ENCODE measurements at regions of chr4 and their contacts with region 1.

Region 1: GRCh38 chr4:139554893-139555704 is 920 bp downstream of the SETD7 start:
- DNase-seq: peak; percentile 89
- H3K4me3 Mint-ChIP-seq: peak overlapping the region; percentile 82
- H3K27ac Mint-ChIP-seq: peak overlapping the region; percentile 73
- H3K4me1 Mint-ChIP-seq: peaks cover 25% of the 10 kb centered on the region
- H3K27me3 Mint-ChIP-seq: no peaks in the 10 kb centered on the region
- CTCF ChIP-seq: no peak

Region 2: DNA sequence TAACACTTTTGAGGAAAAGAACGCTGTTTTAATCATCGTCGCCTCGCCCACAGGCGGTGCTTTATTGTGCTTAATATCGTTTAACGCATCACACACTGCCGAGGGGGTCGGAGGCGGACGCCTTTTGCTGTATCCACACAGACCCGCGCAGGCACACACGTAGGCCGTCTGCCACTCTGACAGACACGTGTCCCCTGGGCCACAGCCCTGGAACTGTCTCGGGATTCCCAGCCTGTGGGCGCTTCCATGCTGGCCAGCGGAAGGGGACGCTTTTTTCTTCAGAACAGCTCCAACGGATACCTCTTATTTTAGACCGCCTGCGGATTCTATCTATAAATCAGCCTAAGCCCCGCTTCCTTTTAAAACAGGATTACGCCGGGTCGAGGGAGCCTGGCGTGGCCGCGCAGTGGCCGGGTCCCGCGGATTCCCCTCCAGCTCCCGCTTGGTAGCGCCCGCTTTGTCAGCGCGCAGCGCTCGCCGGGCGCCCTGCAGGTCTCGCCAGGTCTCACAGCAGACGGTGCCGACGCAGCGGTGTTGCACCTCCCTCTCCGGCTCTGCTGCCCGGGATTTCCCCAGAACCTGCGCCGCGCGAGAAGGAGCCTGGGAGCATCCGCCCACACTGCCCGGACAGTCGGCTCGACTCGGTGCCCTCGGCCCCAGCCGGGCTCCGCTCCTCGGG is 539.7 kb before region 1 on chr4 and contains the start of gene NOCT:
- CTCF ChIA-PET with region 1: no interaction called
- POLR2A ChIA-PET with region 1: interaction called, 10 read pairs
- intact Hi-C with region 1: no loop called
- DNase-seq: peak; percentile 94
- H3K4me3 Mint-ChIP-seq: peak within 1 kb of the TSS; percentile 72
- H3K27ac Mint-ChIP-seq: peak within 1 kb of the TSS; percentile 95
- H3K4me1 Mint-ChIP-seq: peaks cover 38% of the 10 kb centered on the region
- H3K27me3 Mint-ChIP-seq: no peaks in the 10 kb centered on the region
- CTCF ChIP-seq: no peak
- total RNA-seq, gene NOCT: 16.5 and 25.5 TPM in 2 replicates

Region 3: GRCh38 chr4:139453371-139454110 is 101.6 kb before region 1 on chr4:
- CTCF ChIA-PET with region 1: interaction called, 6 read pairs
- POLR2A ChIA-PET with region 1: interaction called, 67 read pairs
- intact Hi-C with region 1: loop called (anchors 10 kb)
- DNase-seq: peak; percentile 98
- H3K4me3 Mint-ChIP-seq: peak overlapping the region; percentile 100
- H3K27ac Mint-ChIP-seq: peak overlapping the region; percentile 97
- H3K4me1 Mint-ChIP-seq: peaks cover 45% of the 10 kb centered on the region
- H3K27me3 Mint-ChIP-seq: no peaks in the 10 kb centered on the region
- CTCF ChIP-seq: no peak

Region 4: GRCh38 chr4:139515531-139515958 is 39.6 kb before region 1 on chr4:
- CTCF ChIA-PET with region 1: no interaction called
- POLR2A ChIA-PET with region 1: no interaction called
- intact Hi-C with region 1: no loop called
- DNase-seq: no peak
- H3K4me3 Mint-ChIP-seq: no peak overlapping the region
- H3K27ac Mint-ChIP-seq: no peak overlapping the region
- H3K4me1 Mint-ChIP-seq: no peaks in the 10 kb centered on the region
- H3K27me3 Mint-ChIP-seq: no peaks in the 10 kb centered on the region
- CTCF ChIP-seq: no peak

Region 5: DNA sequence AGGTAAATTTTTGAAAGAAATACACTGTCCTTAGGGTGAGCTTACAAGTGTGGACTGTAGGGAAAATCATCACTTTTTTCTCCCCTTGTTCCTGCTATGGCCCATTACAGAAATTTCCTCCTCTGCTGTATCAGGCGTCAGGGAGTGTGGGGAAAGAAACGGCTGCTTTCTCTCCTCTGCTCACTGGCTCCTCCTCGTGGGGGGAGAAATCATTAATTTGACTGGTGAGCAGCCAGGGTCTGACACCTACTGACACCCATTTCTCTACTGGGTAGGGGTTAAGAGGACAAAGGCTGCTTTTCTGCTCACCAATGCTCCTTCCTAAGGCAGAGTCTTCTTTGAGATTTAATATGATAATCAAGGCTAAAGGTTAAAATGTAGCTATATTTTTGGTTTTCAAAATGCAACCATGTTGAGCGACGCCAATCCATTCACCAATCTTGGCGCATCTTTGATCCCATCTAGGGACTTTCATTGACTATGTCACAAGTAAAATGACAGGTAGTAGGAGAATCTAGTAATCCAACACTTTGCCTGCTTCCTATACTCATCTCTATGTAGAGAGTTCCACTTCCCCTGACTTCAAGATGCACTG is 24.2 kb before region 1 on chr4:
- CTCF ChIA-PET with region 1: interaction called, 11 read pairs
- POLR2A ChIA-PET with region 1: interaction called, 41 read pairs
- intact Hi-C with region 1: no loop called
- DNase-seq: peak; percentile 65
- H3K4me3 Mint-ChIP-seq: no peak overlapping the region
- H3K27ac Mint-ChIP-seq: peak overlapping the region; percentile 9
- H3K4me1 Mint-ChIP-seq: peaks cover 10% of the 10 kb centered on the region
- H3K27me3 Mint-ChIP-seq: no peaks in the 10 kb centered on the region
- CTCF ChIP-seq: peak; percentile 57

Region 6: GRCh38 chr4:139540632-139541031 is 14.5 kb before region 1 on chr4:
- CTCF ChIA-PET with region 1: interaction called, 5 read pairs
- POLR2A ChIA-PET with region 1: interaction called, 29 read pairs
- intact Hi-C with region 1: no loop called
- DNase-seq: no peak
- H3K4me3 Mint-ChIP-seq: no peak overlapping the region
- H3K27ac Mint-ChIP-seq: no peak overlapping the region
- H3K4me1 Mint-ChIP-seq: peaks cover 6% of the 10 kb centered on the region
- H3K27me3 Mint-ChIP-seq: no peaks in the 10 kb centered on the region
- CTCF ChIP-seq: no peak

Region 7: GRCh38 chr4:139593091-139593564 is 38.0 kb after region 1 on chr4:
- CTCF ChIA-PET with region 1: no interaction called
- POLR2A ChIA-PET with region 1: interaction called, 17 read pairs
- intact Hi-C with region 1: no loop called
- DNase-seq: no peak
- H3K4me3 Mint-ChIP-seq: no peak overlapping the region
- H3K27ac Mint-ChIP-seq: peak overlapping the region; percentile 14
- H3K4me1 Mint-ChIP-seq: peaks cover 26% of the 10 kb centered on the region
- H3K27me3 Mint-ChIP-seq: no peaks in the 10 kb centered on the region
- CTCF ChIP-seq: no peak

Region 8: GRCh38 chr4:139665690-139666529 is 110.8 kb after region 1 on chr4 and contains the start of gene MGST2:
- CTCF ChIA-PET with region 1: interaction called, 3 read pairs
- POLR2A ChIA-PET with region 1: interaction called, 15 read pairs
- intact Hi-C with region 1: no loop called
- DNase-seq: peak; percentile 65
- H3K4me3 Mint-ChIP-seq: peak within 1 kb of the TSS; percentile 81
- H3K27ac Mint-ChIP-seq: peak within 1 kb of the TSS; percentile 93
- H3K4me1 Mint-ChIP-seq: peaks cover 23% of the 10 kb centered on the region
- H3K27me3 Mint-ChIP-seq: no peaks in the 10 kb centered on the region
- CTCF ChIP-seq: no peak
- total RNA-seq, gene MGST2: 27.5 and 41.5 TPM in 2 replicates

Region 9: DNA sequence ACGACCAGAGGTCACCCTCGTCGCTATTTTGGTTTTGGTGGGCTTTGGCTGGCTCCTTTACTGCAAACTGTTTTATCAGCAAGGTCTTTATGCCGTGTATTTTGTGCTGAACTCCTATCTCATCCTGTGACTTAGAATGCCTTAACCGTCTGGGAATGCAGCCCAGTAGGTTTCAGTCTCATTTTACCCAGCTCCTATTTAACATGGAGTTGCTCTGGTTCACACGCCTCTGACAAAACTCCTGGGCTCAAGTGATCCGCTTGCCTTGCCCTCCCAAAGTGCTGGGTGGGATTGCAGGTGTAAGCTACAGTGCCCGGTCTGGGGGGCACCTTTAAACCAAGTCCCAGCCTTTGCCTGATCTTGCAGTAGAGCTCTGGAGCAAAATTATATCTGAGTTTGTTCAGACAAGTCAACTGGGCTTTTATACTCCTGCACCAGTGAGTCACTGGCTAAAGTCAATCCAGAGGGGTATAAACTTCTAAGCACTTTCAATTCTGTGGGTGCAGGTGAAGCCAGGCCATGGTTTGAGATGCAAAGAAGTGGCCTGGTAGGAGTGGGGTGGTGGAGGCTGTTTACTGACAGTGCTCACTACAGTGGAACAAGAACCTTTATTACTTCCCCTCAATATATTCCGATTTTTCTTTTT is 160.8 kb after region 1 on chr4:
- CTCF ChIA-PET with region 1: no interaction called
- POLR2A ChIA-PET with region 1: no interaction called
- intact Hi-C with region 1: no loop called
- DNase-seq: no peak
- H3K4me3 Mint-ChIP-seq: no peak overlapping the region
- H3K27ac Mint-ChIP-seq: no peak overlapping the region
- H3K4me1 Mint-ChIP-seq: no peaks in the 10 kb centered on the region
- H3K27me3 Mint-ChIP-seq: no peaks in the 10 kb centered on the region
- CTCF ChIP-seq: no peak

Region 10: GRCh38 chr4:139768896-139769295 is 213.8 kb after region 1 on chr4:
- CTCF ChIA-PET with region 1: no interaction called
- POLR2A ChIA-PET with region 1: no interaction called
- intact Hi-C with region 1: no loop called
- DNase-seq: peak; percentile 29
- H3K4me3 Mint-ChIP-seq: no peak overlapping the region
- H3K27ac Mint-ChIP-seq: no peak overlapping the region
- H3K4me1 Mint-ChIP-seq: no peaks in the 10 kb centered on the region
- H3K27me3 Mint-ChIP-seq: no peaks in the 10 kb centered on the region
- CTCF ChIP-seq: no peak